ENCODE measurements at regions of chr7 and their contacts with region 1.

Region 1: GRCh38 chr7:73342645-73343044 is 14.7 kb downstream of the FKBP6 start:
- DNase-seq: peak; percentile 53
- H3K4me3 ChIP-seq: no peak overlapping the region
- H3K27ac ChIP-seq: no peak overlapping the region
- H3K4me1 ChIP-seq: no peaks in the 10 kb centered on the region
- H3K27me3 ChIP-seq: peaks cover 2% of the 10 kb centered on the region in 2 experiments
- CTCF ChIP-seq: peak in 1 of 2 donors; percentile 52
- POLR2A ChIP-seq: no peak

Region 2: DNA sequence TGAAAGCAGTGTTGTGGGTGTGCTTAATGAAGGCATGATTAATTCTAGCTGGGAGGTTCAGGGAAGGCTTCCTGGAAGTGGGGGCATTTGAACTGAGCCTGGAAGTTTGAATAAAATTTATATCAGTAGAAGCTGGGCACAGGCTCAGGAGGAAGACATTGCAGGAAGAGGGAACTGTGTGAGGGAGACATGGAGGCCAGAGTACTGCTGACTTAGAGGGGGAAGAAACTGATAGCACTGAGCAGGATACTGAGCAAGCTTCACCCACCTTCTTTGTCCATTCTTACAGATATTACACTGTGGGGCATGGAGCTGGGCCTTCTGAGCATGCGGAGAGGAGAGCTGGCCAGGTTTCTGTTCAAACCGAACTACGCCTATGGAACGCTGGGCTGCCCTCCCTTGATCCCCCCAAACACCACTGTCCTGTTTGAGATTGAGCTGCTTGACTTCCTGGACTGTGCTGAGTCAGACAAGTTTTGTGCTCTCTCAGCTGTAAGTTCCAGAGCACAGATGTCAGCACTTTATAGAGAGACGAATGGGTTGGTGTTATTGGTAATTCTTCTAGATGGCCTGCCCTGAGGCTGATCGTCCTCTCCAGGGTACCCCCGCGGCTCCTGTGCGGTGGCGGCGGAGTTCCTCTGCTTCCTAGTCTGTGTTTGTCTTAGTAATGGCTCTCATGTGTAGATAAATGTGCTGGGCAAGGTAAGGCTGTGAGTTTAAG is 12.6 kb before region 1 on chr7:
- CTCF ChIA-PET with region 1: interaction called, 17 read pairs
- POLR2A ChIA-PET with region 1: interaction called, 4 read pairs
- dilution Hi-C with region 1: no loop called
- intact Hi-C with region 1: no loop called
- DNase-seq: peak; percentile 20
- H3K4me3 ChIP-seq: no peak overlapping the region
- H3K27ac ChIP-seq: no peak overlapping the region
- H3K4me1 ChIP-seq: peaks cover 2% of the 10 kb centered on the region
- H3K27me3 ChIP-seq: peaks cover 8 to 13% of the 10 kb centered on the region in 2 experiments
- CTCF ChIP-seq: no peak
- POLR2A ChIP-seq: no peak

Region 3: DNA sequence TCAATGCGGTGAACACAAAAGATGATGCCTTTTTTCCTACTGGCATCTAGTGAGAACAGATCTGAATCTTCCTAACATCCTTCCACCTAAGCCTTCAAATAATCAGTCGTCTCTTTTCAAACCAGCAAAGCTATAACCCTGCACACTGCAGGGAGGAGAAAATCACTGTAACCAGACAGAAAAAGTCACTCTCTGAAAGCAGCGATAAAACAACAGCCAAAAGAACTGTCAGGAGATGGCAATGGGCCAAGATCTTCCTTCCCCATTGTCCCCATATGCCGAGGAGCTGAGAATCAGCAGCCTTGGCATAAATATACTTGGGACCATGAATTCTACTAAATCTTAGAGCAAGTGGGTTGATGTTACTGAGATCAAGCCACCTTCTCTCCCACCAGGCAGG is 104.0 kb after region 1 on chr7:
- CTCF ChIA-PET with region 1: interaction called, 71 read pairs
- POLR2A ChIA-PET with region 1: no interaction called
- dilution Hi-C with region 1: no loop called
- intact Hi-C with region 1: loop called (anchors 5 kb)
- DNase-seq: no peak
- H3K4me3 ChIP-seq: no peak overlapping the region
- H3K27ac ChIP-seq: no peak overlapping the region
- H3K4me1 ChIP-seq: no peaks in the 10 kb centered on the region
- H3K27me3 ChIP-seq: no peaks in the 10 kb centered on the region
- CTCF ChIP-seq: no peak
- POLR2A ChIP-seq: no peak

Region 4: GRCh38 chr7:73451780-73452398 is 109.2 kb after region 1 on chr7:
- CTCF ChIA-PET with region 1: interaction called, 71 read pairs
- POLR2A ChIA-PET with region 1: no interaction called
- dilution Hi-C with region 1: no loop called
- intact Hi-C with region 1: loop called (anchors 5 kb)
- DNase-seq: peak; percentile 68
- H3K4me3 ChIP-seq: no peak overlapping the region
- H3K27ac ChIP-seq: no peak overlapping the region
- H3K4me1 ChIP-seq: no peaks in the 10 kb centered on the region
- H3K27me3 ChIP-seq: no peaks in the 10 kb centered on the region
- CTCF ChIP-seq: peak; percentile 85 to 88
- POLR2A ChIP-seq: no peak

Region 5: DNA sequence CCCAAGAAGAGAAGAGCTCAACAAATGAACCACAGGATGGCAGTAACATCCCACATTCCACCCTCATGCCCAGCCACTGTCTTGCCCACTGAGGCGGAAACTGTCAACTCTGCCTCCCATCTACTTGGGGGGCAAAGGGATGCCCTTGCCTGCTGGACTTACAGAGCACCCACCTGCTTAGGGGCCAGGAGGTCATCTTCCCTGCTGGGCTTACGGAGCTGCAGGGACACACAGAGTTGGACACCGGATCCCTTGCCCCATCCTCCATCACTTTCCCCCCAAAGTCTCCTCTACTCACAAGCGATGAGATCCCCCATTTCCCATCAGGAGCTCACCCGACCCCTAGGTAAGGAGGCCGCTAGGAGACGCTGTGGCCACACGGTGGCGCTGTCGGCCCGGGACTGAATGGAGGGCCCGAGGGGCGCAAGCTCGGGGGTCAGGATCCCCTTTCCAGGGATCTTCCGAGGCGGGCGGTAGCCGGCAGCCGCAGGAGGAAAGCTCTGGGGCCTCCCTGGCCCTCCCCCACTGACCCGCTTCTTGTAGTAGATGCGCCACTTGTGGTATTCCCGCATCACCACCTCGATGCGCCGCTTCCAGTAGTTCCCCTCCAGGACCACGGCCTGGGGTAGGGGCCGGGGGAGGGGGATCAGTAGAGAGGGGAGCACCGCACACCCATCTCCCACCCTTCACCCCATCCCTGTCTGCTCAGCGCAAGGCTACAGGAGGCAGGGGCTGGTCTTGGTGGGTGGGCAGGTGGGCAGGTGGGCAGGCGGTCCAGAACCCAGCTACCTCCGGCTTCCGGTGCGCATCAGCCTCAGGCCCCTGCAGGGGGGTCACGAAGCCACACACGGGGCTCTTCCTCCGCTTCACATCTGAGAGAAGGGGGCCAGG is 264.4 kb after region 1 on chr7:
- CTCF ChIA-PET with region 1: no interaction called
- POLR2A ChIA-PET with region 1: no interaction called
- dilution Hi-C with region 1: no loop called
- intact Hi-C with region 1: no loop called
- DNase-seq: peak; percentile 43
- H3K4me3 ChIP-seq: no peak overlapping the region
- H3K27ac ChIP-seq: no peak overlapping the region
- H3K4me1 ChIP-seq: no peaks in the 10 kb centered on the region
- H3K27me3 ChIP-seq: no peaks in the 10 kb centered on the region
- CTCF ChIP-seq: peak; percentile 90 to 92
- POLR2A ChIP-seq: no peak

Region 6: DNA sequence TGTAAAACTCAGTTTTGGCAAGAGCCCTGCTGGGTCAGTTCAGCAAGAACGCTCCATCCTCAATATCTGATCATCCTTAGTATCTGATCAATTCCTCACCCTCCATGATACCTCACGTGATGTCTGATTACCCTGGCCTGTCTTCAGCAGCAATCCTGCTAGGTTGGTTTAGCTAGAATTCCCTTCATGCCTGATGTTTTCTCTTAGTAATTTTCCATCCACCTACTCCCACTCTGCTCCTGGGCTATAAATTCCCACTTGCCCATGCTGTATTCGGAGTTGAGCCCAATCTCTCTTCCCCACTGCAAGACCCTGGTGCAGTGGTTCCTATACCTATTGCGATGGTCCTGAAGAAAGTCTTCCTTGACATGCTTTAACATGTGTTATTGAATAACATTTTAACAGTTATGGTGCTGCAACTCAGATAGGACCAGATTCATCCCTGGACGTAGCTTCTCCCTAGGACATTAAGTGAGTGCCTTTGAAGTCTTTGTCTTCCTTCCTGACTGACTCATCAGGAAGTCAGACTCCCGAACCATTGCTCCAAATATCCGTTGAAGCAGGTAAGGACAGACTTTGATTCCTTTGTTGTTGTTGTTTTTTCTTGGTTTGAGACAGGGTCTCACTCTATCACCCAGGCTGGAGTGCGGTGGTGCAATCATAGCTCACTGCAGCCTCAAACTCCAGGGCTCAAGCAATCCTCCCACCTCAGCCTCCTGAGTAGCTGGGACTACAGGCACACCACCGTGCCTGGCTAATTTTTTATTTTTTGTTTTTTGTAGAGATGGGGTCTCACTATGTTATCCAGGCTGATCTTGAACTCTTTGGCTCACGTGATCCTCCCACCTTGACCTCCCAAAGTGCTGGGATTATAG is 456.9 kb after region 1 on chr7:
- CTCF ChIA-PET with region 1: no interaction called
- POLR2A ChIA-PET with region 1: no interaction called
- dilution Hi-C with region 1: no loop called
- intact Hi-C with region 1: no loop called
- DNase-seq: no peak
- H3K4me3 ChIP-seq: no peak overlapping the region
- H3K27ac ChIP-seq: no peak overlapping the region
- H3K4me1 ChIP-seq: peaks cover 5% of the 10 kb centered on the region
- H3K27me3 ChIP-seq: no peaks in the 10 kb centered on the region
- CTCF ChIP-seq: no peak
- POLR2A ChIP-seq: no peak

Measured in endothelial cell of umbilical vein (primary cell).